ENCODE measurements at regions of chrX and their contacts with region 1.

Region 1: GRCh38 chrX:150486011-150486410 is 82.4 kb upstream of the MTM1 start:
- DNase-seq: peak; percentile 57
- ATAC-seq: peak; percentile 70
- H3K4me3 Mint-ChIP-seq: no peak overlapping the region
- H3K27ac Mint-ChIP-seq: no peak overlapping the region
- H3K4me1 Mint-ChIP-seq: peaks cover 26% of the 10 kb centered on the region
- H3K27me3 Mint-ChIP-seq: peaks cover 3% of the 10 kb centered on the region

Region 2: DNA sequence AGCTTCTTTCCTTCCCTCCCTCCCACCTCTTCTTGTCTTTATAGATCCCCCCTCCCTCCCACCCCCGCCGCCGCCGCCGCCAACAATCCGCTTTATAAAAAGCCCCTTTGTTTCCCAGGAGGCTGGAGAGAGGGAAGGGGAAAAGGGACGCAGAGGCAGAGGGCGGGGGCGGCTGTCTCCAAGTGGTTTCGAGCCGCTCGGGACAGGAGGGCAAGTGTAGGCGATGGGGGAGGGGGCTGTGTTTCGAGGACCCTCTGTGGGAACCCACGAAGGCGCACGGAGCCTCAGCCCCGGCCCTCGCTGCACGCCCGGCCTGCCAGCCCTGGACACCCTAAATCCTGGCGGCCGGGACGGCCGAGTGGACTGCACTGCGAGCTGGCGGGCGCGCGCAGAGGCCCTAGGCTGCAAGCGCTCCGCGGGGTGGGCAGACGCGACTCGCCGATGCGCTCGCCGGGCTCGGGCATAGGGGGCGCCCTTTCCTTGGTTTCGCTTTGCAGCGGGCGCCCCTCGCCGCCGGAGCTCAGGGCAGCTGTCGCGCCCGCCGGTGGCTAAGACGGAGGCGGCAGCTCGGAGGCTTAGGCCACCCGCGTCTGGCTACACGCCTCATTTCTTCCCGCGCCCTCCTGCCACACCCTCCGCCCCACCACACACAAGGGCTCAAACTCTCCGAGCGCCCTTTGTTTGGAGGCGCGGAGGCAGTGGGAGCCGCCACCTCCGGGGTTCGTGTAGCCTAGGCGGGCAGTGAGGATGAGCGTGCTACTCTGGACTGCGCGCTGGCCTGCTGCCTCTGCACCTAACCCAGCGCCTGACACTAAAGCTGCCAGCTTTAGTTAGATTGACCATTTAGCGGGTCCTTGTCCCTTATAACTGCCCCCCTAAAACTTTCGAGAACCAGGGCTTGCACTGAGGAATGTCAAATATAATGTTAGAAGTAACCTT is 120.7 kb before region 1 on chrX:
- CTCF ChIA-PET with region 1: interaction called, 23 read pairs
- POLR2A ChIA-PET with region 1: interaction called, 3 read pairs
- DNase-seq: peak; percentile 76
- ATAC-seq: peak; percentile 57
- H3K4me3 Mint-ChIP-seq: peak overlapping the region; percentile 77
- H3K27ac Mint-ChIP-seq: no peak overlapping the region
- H3K4me1 Mint-ChIP-seq: peaks cover 29% of the 10 kb centered on the region
- H3K27me3 Mint-ChIP-seq: peaks cover 27% of the 10 kb centered on the region

Measured in activated CD8-positive, alpha-beta T cell treated with anti-CD3 and anti-CD28 coated beads, Interleukin-2, amount 10 ng/mL, durations not matched to agents 7 days and 5 days (primary cell).